HCT116 (cell line): ENCODE measurements at regions of chr17 and their contacts with region 1.

Region 1: DNA sequence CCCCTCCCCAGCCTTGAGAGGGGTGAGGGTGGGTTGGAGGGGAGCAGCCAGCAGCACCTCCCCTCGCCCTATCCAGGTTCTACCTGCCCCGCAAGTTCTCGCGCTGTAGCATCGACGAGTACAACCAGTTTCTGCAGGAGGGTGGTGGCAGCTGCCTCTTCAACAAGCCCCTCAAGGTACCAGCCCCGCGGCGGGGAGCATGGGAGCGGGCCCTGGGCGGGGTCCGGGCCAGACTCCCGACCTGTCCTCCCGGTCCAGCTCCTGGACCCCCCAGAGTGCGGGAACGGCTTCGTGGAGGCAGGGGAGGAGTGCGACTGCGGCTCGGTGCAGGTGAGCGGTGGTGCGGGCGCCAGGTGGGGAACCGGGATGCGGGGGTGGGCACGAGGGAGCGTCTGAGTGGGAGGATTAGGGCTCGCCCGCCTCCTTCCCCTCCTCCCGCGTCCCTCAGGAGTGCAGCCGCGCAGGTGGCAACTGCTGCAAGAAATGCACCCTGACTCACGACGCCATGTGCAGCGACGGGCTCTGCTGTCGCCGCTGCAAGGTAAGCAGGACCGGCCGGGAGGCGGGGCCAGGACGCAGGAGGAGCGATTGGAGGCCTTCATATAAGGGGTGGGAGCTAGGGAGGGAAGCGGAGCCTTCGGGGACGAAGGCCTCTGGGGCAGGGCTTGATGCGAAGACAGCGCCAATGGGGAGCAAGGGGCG is 16.5 kb downstream of the ADAM11 start:
- DNase-seq: peak; percentile 97
- ATAC-seq: peak; percentile 91
- H3K4me3 ChIP-seq: peak overlapping the region; percentile 62 to 67
- H3K27ac ChIP-seq: peak overlapping the region; percentile 69
- H3K4me1 ChIP-seq: peaks cover 3 to 30% of the 10 kb centered on the region in 2 experiments; a peak in 3 of 4 replicates
- H3K27me3 ChIP-seq: no peaks in the 10 kb centered on the region
- CTCF ChIP-seq: no peak; a peak in 1 of 6 replicates
- POLR2A ChIP-seq: peak; percentile 69
- RAD21 ChIP-seq: no peak

Region 2: GRCh38 chr17:44556166-44556831 is 219.0 kb before region 1 on chr17:
- CTCF ChIA-PET with region 1: no interaction called
- POLR2A ChIA-PET with region 1: no interaction called
- RAD21 ChIA-PET with region 1: no interaction called
- intact Hi-C with region 1: no loop called
- DNase-seq: peak; percentile 19
- ATAC-seq: peak; percentile 71
- H3K4me3 ChIP-seq: peak overlapping the region; percentile 68 to 71
- H3K27ac ChIP-seq: peak overlapping the region; percentile 62
- H3K4me1 ChIP-seq: peaks cover 3 to 14% of the 10 kb centered on the region in 2 experiments; a peak in 3 of 4 replicates
- H3K27me3 ChIP-seq: no peaks in the 10 kb centered on the region
- CTCF ChIP-seq: no peak
- POLR2A ChIP-seq: no peak
- RAD21 ChIP-seq: no peak

Region 3: DNA sequence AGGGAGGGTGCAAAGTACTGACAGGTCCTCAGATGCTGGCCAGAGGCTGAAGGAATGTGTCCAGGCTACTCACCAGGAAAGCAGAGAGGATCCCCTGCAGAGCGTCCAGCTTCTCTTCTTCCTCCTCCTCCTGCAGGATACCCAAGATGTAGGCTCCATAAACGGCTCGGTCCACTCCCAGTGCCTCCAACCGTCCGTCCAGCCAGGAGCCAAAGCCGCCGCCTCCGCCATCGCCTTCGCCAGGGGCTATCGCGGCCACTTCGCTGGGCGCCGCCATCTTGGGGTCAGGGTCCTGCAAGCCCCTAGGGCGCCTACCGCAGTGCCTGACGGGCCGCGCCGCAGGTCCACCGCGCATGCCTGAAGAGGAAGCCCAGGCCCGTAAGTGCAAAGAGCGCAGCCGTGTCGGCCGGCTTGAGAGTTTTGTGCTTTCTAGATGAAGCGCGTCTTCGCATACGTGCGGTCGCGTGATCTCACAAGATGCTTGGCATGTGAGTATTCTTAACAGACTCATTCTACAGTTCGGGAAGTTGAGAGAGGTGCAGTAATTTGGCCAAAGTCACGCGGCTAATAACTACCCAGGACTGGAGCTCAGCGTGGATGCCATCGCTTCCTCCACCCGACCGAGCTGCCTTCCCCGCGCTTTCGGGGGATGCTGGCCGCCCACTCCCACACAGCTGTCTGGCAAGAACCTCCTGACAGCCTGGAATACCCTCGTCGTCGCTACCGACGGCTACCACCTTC is 85.6 kb before region 1 on chr17 and contains the start of gene CCDC43:
- CTCF ChIA-PET with region 1: no interaction called
- POLR2A ChIA-PET with region 1: no interaction called
- RAD21 ChIA-PET with region 1: no interaction called
- intact Hi-C with region 1: no loop called
- DNase-seq: peak; percentile 90
- ATAC-seq: peak; percentile 93
- H3K4me3 ChIP-seq: peak within 1 kb of the TSS; percentile 98
- H3K27ac ChIP-seq: peak within 1 kb of the TSS; percentile 69
- H3K4me1 ChIP-seq: peaks cover 13 to 30% of the 10 kb centered on the region in 2 experiments
- H3K27me3 ChIP-seq: no peaks in the 10 kb centered on the region
- CTCF ChIP-seq: no peak
- POLR2A ChIP-seq: peak; percentile 87
- RAD21 ChIP-seq: no peak
- total RNA-seq, gene CCDC43: 33.0 TPM

Region 4: DNA sequence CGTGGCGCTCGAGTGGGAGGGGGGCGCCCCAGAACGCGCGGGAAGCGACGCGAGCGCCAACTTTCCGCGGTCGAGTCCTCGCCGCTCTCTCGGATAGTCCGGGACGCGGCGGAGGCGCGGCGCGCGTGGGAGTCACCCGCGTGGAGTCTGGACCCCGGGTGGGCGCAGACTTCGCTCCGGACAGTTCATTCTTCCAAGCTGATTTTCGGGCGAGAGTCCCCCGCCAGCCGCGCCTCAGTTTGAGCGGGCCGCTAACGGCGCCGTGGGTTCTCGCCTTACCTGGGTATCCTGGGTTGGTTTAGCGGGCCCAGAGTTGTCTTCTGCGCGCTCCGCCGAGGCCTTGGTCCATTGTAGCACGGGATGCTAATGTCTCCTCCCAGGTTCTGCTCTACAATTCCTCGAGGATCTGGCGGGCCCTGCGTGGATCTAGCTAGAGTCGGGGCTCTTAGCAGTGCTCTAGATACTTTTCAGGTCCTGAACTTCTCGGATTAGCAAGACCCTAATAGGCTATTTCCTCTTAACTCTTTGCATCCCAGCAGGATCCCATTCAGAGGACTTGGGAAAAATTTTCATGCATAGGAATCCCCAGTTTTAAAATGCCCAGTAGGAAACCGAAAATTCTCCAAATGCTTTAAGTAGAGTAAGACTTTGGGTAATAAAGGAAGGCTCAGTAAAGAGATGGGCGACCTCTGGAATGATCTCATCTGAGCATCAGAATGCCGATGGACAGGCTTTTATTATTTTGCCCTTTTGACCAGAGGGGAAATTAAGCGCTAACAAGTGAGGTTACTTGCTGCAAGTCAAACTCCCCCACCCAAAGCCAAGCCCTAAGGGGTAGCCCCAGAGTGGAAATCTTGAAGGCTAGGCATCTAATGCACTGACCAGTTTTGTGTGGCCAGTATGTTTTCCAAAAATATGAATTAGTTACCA is 55.3 kb after region 1 on chr17:
- CTCF ChIA-PET with region 1: interaction called, 13 read pairs
- POLR2A ChIA-PET with region 1: no interaction called
- RAD21 ChIA-PET with region 1: interaction called, 4 to 5 read pairs
- intact Hi-C with region 1: loop called (anchors 2 kb)
- DNase-seq: no peak
- ATAC-seq: peak; percentile 35
- H3K4me3 ChIP-seq: peak overlapping the region; percentile 82 to 84
- H3K27ac ChIP-seq: peak overlapping the region; percentile 95
- H3K4me1 ChIP-seq: peaks cover 45 to 69% of the 10 kb centered on the region in 2 experiments
- H3K27me3 ChIP-seq: no peaks in the 10 kb centered on the region
- CTCF ChIP-seq: no peak
- POLR2A ChIP-seq: peak; percentile 5
- RAD21 ChIP-seq: no peak

Region 5: GRCh38 chr17:44864866-44865660 is 89.8 kb after region 1 on chr17:
- CTCF ChIA-PET with region 1: interaction called, 52 read pairs
- POLR2A ChIA-PET with region 1: interaction called, 4 read pairs
- RAD21 ChIA-PET with region 1: interaction called, 4 to 6 read pairs
- intact Hi-C with region 1: loop called (anchors 1 kb)
- DNase-seq: peak; percentile 47
- ATAC-seq: peak; percentile 90
- H3K4me3 ChIP-seq: no peak overlapping the region
- H3K27ac ChIP-seq: no peak overlapping the region
- H3K4me1 ChIP-seq: no peaks in the 10 kb centered on the region
- H3K27me3 ChIP-seq: no peaks in the 10 kb centered on the region
- CTCF ChIP-seq: peak; percentile 85 to 95 (median 87)
- POLR2A ChIP-seq: no peak
- RAD21 ChIP-seq: peak; percentile 79

Region 6: GRCh38 chr17:45021607-45022287 is 246.5 kb after region 1 on chr17:
- CTCF ChIA-PET with region 1: interaction called, 5 read pairs
- POLR2A ChIA-PET with region 1: no interaction called
- RAD21 ChIA-PET with region 1: no interaction called
- intact Hi-C with region 1: loop called (anchors 1 kb)
- DNase-seq: no peak
- ATAC-seq: peak; percentile 81
- H3K4me3 ChIP-seq: no peak overlapping the region
- H3K27ac ChIP-seq: no peak overlapping the region
- H3K4me1 ChIP-seq: peaks cover 11 to 29% of the 10 kb centered on the region in 2 experiments; a peak in 3 of 4 replicates
- H3K27me3 ChIP-seq: no peaks in the 10 kb centered on the region
- CTCF ChIP-seq: peak; percentile 42 to 87 (median 72); a peak in 5 of 6 replicates
- POLR2A ChIP-seq: no peak
- RAD21 ChIP-seq: peak; percentile 62